Tibial artery (tissue), 4 donors: ENCODE measurements at regions of chr2 and their contacts with region 1.

Region 1: DNA sequence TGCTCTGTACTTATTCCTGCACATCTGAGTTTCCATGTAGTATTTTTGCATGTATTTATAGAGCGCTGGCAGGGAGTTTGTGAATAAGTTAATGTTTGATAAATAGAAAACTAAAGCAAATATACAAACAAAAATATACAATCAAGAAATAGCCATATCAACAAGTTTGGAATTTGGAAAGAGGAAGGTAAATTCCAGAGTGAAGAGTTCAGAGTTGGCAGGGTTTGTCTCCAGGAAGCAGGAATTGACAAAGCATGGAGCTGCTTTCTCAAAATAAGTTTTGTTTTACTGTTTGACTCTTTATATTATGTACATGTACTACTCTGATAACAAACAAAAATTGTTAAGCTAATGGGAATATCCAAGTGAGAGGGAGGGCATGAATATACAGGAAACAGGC is 80.3 kb downstream of the SPOPL start:
- DNase-seq: no peak
- H3K4me3 ChIP-seq: no peak overlapping the region
- H3K27ac ChIP-seq: no peak overlapping the region
- H3K4me1 ChIP-seq: no peaks in the 10 kb centered on the region
- H3K27me3 ChIP-seq: no peaks in the 10 kb centered on the region
- CTCF ChIP-seq: no peak

Region 2: GRCh38 chr2:137826373-137827372 is 755.2 kb before region 1 on chr2:
- intact Hi-C with region 1: no loop called
- DNase-seq: no peak
- H3K4me3 ChIP-seq: no peak overlapping the region
- H3K27ac ChIP-seq: no peak overlapping the region
- H3K4me1 ChIP-seq: no peaks in the 10 kb centered on the region
- H3K27me3 ChIP-seq: no peaks in the 10 kb centered on the region
- CTCF ChIP-seq: no peak

Region 3: GRCh38 chr2:138516030-138516704 is 65.7 kb before region 1 on chr2:
- intact Hi-C with region 1: loop called (anchors 10 kb)
- DNase-seq: no peak
- H3K4me3 ChIP-seq: no peak overlapping the region
- H3K27ac ChIP-seq: no peak overlapping the region
- H3K4me1 ChIP-seq: peaks cover 0 to 72% (median 33%) of the 10 kb centered on the region in 4 donors
- H3K27me3 ChIP-seq: no peaks in the 10 kb centered on the region
- CTCF ChIP-seq: no peak

Region 4: GRCh38 chr2:138730497-138731030 is 148.7 kb after region 1 on chr2:
- intact Hi-C with region 1: no loop called
- DNase-seq: no peak
- H3K4me3 ChIP-seq: no peak overlapping the region
- H3K27ac ChIP-seq: no peak overlapping the region
- H3K4me1 ChIP-seq: no peaks in the 10 kb centered on the region
- H3K27me3 ChIP-seq: no peaks in the 10 kb centered on the region
- CTCF ChIP-seq: no peak